Activated T-helper 1 cell treated with anti-CD3 and anti-CD28 coated beads, Interleukin-12 subunit alpha, Interleukin-12 subunit beta, Interleukin-2, Interleukin-4 antibody, amounts not matched to agents 30 ng/mL and 10 ng/mL and 1 ng/mL, durations not matched to agents 14 hours and 24 hours and 36 hours (primary cell): ENCODE measurements at regions of chr3 and their contacts with region 1.

Region 1: GRCh38 chr3:120417272-120417911 is 33.4 kb downstream of the FSTL1 start:
- DNase-seq: peak; percentile 78
- H3K4me3 Mint-ChIP-seq: peak overlapping the region; percentile 84
- H3K27ac Mint-ChIP-seq: no peak overlapping the region
- H3K4me1 Mint-ChIP-seq: peaks cover 22% of the 10 kb centered on the region
- H3K27me3 Mint-ChIP-seq: peaks cover 2% of the 10 kb centered on the region

Region 2: GRCh38 chr3:119819806-119820205 is 597.6 kb before region 1 on chr3:
- intact Hi-C with region 1: loop called (anchors 2 kb)
- DNase-seq: no peak
- H3K4me3 Mint-ChIP-seq: no peak overlapping the region
- H3K27ac Mint-ChIP-seq: no peak overlapping the region
- H3K4me1 Mint-ChIP-seq: no peaks in the 10 kb centered on the region
- H3K27me3 Mint-ChIP-seq: peaks cover 1% of the 10 kb centered on the region

Region 3: GRCh38 chr3:120039642-120040610 is 377.5 kb before region 1 on chr3:
- intact Hi-C with region 1: loop called (anchors 1 kb)
- DNase-seq: no peak
- H3K4me3 Mint-ChIP-seq: no peak overlapping the region
- H3K27ac Mint-ChIP-seq: no peak overlapping the region
- H3K4me1 Mint-ChIP-seq: no peaks in the 10 kb centered on the region
- H3K27me3 Mint-ChIP-seq: no peaks in the 10 kb centered on the region

Region 4: GRCh38 chr3:120487191-120487650 is 69.8 kb after region 1 on chr3:
- intact Hi-C with region 1: no loop called
- DNase-seq: no peak
- H3K4me3 Mint-ChIP-seq: no peak overlapping the region
- H3K27ac Mint-ChIP-seq: no peak overlapping the region
- H3K4me1 Mint-ChIP-seq: no peaks in the 10 kb centered on the region
- H3K27me3 Mint-ChIP-seq: peaks cover 5% of the 10 kb centered on the region

Region 5: DNA sequence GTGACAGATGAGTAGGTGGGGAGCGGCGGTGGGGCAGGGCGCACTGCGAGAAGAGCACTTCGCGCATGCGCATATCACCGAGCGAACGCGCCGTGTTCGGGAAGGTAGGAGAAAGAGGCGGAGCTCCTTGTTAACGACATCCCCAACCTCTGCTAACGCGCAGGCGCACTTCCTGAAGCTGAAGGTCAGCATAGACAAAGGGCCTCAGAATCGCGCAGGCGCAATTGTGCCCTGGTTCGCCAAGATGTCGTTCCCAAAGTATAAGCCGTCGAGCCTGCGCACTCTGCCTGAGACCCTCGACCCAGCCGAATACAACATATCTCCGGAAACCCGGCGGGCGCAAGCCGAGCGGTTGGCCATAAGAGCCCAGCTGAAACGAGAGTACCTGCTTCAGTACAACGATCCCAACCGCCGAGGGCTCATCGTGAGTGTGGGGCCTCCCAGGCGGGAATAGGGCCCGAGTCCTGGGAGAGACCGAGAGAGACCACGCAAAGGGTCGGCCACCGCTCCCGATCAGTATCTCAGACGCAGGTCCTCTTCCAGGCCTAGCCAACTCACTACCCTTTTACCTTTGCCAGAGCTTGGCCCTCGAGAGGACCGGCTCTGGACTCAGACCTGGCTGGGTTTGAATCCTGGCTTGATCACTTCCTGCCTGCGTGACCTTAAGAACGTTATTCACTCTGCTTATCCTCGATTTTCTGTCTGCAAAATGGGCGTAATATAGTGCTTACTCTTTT is 178.9 kb after region 1 on chr3 and contains the start of gene NDUFB4:
- intact Hi-C with region 1: loop called (anchors 1 kb)
- DNase-seq: peak; percentile 94
- H3K4me3 Mint-ChIP-seq: peak within 1 kb of the TSS; percentile 91
- H3K27ac Mint-ChIP-seq: peak within 1 kb of the TSS; percentile 96
- H3K4me1 Mint-ChIP-seq: peaks cover 15% of the 10 kb centered on the region
- H3K27me3 Mint-ChIP-seq: no peaks in the 10 kb centered on the region
- total RNA-seq, gene NDUFB4: 107 and 108 TPM in 2 replicates

Region 6: GRCh38 chr3:120795017-120795648 is 377.7 kb after region 1 on chr3:
- intact Hi-C with region 1: loop called (anchors 2 kb)
- DNase-seq: peak; percentile 63
- H3K4me3 Mint-ChIP-seq: no peak overlapping the region
- H3K27ac Mint-ChIP-seq: no peak overlapping the region
- H3K4me1 Mint-ChIP-seq: no peaks in the 10 kb centered on the region
- H3K27me3 Mint-ChIP-seq: peaks cover 6% of the 10 kb centered on the region

Region 7: GRCh38 chr3:121324320-121324719 is 906.9 kb after region 1 on chr3:
- intact Hi-C with region 1: no loop called
- DNase-seq: no peak
- H3K4me3 Mint-ChIP-seq: no peak overlapping the region
- H3K27ac Mint-ChIP-seq: no peak overlapping the region
- H3K4me1 Mint-ChIP-seq: no peaks in the 10 kb centered on the region
- H3K27me3 Mint-ChIP-seq: no peaks in the 10 kb centered on the region